ENCODE measurements at regions of chr11 and their contacts with region 1.

Region 1: GRCh38 chr11:108654994-108655631 is 9.8 kb upstream of the DDX10 start:
- DNase-seq: peak in 1 of 5 donors; percentile 13
- ATAC-seq: peak in 2 of 4 donors; percentile 58 to 69
- H3K4me3 ChIP-seq: no peak overlapping the region
- H3K27ac ChIP-seq: no peak overlapping the region
- H3K4me1 ChIP-seq: no peaks in the 10 kb centered on the region
- H3K27me3 ChIP-seq: peaks cover 0 to 2% (median 0%) of the 10 kb centered on the region in 9 donors
- CTCF ChIP-seq: peak; percentile 34 to 66 (median 55)
- POLR2A ChIP-seq: no peak

Region 2: GRCh38 chr11:108008656-108009496 is 646.2 kb before region 1 on chr11 and contains the start of gene CUL5:
- intact Hi-C with region 1: loop called in 5 of 10 experiments (anchors 10 kb)
- DNase-seq: peak; percentile 91 to 97 (median 93)
- ATAC-seq: peak; percentile 95 to 98 (median 98)
- H3K4me3 ChIP-seq: peak within 1 kb of the TSS; percentile 71 to 99 (median 88)
- H3K27ac ChIP-seq: peak within 1 kb of the TSS; percentile 85 to 100 (median 98)
- H3K4me1 ChIP-seq: peaks cover 0 to 47% (median 35%) of the 10 kb centered on the region in 12 donors
- H3K27me3 ChIP-seq: no peaks in the 10 kb centered on the region
- CTCF ChIP-seq: peak; percentile 76 to 95 (median 89)
- POLR2A ChIP-seq: peak in 1 of 2 donors; percentile 23
- total RNA-seq, gene CUL5: 22.0 to 46.0 (median 36.8) TPM

Region 3: DNA sequence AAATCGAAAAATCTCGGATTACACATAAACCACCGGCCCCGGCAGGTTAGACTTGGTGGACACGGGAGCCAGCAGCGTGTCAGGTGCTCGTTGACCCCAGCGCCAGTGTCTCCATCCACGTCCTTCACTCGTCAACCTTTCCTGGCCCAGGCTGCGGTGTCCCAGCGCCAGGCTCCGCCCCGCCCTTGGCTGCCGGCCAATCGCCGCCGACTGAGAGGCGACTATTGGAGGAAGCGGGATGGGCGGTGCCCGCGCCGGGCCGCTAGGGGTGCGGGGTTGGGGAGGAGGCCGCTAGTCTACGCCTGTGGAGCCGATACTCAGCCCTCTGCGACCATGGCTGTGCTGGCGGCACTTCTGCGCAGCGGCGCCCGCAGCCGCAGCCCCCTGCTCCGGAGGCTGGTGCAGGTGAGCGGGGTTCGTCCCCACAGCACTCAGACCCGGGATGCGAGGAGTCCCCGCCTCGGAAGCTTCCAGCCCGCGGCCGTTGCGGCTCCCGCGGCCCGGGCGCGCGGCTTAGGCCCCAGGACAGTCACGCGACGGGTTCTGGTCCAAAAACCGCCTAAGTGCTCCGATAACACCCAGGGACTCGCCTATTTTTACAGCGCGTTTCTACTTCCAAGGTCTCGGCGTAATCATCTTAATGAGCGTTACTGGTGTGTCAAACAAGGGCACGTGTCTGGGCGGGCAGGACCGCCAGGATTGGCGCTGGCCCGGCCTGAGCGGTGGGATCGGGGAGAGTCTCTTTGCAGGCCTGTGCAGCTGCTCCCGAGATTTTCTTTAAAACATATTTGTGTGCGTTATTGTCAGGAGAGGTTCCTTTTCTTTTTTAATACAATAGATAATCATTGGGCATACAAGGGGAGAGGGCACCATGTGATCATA is 533.6 kb before region 1 on chr11 and contains the start of gene ACAT1:
- intact Hi-C with region 1: loop called in 2 of 10 experiments (anchors 5 to 10 kb)
- DNase-seq: peak; percentile 98 to 100 (median 99)
- ATAC-seq: peak; percentile 88 to 96 (median 94)
- H3K4me3 ChIP-seq: peak within 1 kb of the TSS; percentile 38 to 85 (median 74)
- H3K27ac ChIP-seq: peak within 1 kb of the TSS; percentile 90 to 97 (median 94)
- H3K4me1 ChIP-seq: peaks cover 0 to 55% (median 31%) of the 10 kb centered on the region in 12 donors
- H3K27me3 ChIP-seq: peaks cover 0 to 3% (median 0%) of the 10 kb centered on the region in 9 donors
- CTCF ChIP-seq: peak in 10 of 12 donors; percentile 27 to 49 (median 33)
- POLR2A ChIP-seq: peak; percentile 66 to 94
- total RNA-seq, gene ACAT1: 206 to 1,337 (median 394) TPM

Region 4: DNA sequence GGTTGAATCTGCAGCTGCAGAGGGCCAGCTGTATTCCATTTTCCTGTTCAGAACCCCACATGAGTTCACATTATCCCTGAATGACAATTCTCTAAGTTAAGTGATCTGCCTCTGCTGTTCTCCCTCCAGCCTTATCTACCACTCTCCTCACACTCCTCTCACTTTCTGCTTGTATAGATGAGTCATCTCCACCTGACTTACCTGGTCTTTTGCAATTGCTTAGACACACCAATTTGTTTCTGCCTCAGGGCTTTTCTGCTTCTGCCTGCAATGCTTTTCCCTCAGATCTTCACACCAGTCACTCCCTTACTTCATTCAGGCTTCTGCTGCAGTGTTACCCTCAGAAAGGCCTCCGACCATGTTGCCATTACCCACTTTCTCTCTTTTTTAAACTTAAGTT is 314.1 kb before region 1 on chr11:
- intact Hi-C with region 1: loop called in 3 of 10 experiments (anchors 10 kb)
- DNase-seq: no peak
- ATAC-seq: no peak
- H3K4me3 ChIP-seq: no peak overlapping the region
- H3K27ac ChIP-seq: no peak overlapping the region
- H3K4me1 ChIP-seq: no peaks in the 10 kb centered on the region
- H3K27me3 ChIP-seq: no peaks in the 10 kb centered on the region
- CTCF ChIP-seq: no peak
- POLR2A ChIP-seq: no peak

Region 5: GRCh38 chr11:108414958-108415357 is 240.2 kb before region 1 on chr11:
- intact Hi-C with region 1: loop called in 2 of 10 experiments (anchors 2 to 5 kb)
- DNase-seq: no peak
- ATAC-seq: no peak
- H3K4me3 ChIP-seq: no peak overlapping the region
- H3K27ac ChIP-seq: no peak overlapping the region
- H3K4me1 ChIP-seq: no peaks in the 10 kb centered on the region
- H3K27me3 ChIP-seq: no peaks in the 10 kb centered on the region
- CTCF ChIP-seq: no peak
- POLR2A ChIP-seq: no peak

Measured in heart left ventricle (tissue), 16 donors.